Vagina (tissue), 2 donors: ENCODE measurements at regions of chr14 and their contacts with region 1.

Region 1: GRCh38 chr14:77040059-77040740 is 11.7 kb upstream of the IRF2BPL start:
- DNase-seq: peak in 1 of 2 donors; percentile 98
- H3K4me3 ChIP-seq: peak overlapping the region; percentile 30 to 34
- H3K27ac ChIP-seq: peak overlapping the region; percentile 98
- H3K4me1 ChIP-seq: peaks cover 92% of the 10 kb centered on the region
- H3K27me3 ChIP-seq: no peaks in the 10 kb centered on the region
- CTCF ChIP-seq: no peak
- POLR2A ChIP-seq: no peak

Region 2: DNA sequence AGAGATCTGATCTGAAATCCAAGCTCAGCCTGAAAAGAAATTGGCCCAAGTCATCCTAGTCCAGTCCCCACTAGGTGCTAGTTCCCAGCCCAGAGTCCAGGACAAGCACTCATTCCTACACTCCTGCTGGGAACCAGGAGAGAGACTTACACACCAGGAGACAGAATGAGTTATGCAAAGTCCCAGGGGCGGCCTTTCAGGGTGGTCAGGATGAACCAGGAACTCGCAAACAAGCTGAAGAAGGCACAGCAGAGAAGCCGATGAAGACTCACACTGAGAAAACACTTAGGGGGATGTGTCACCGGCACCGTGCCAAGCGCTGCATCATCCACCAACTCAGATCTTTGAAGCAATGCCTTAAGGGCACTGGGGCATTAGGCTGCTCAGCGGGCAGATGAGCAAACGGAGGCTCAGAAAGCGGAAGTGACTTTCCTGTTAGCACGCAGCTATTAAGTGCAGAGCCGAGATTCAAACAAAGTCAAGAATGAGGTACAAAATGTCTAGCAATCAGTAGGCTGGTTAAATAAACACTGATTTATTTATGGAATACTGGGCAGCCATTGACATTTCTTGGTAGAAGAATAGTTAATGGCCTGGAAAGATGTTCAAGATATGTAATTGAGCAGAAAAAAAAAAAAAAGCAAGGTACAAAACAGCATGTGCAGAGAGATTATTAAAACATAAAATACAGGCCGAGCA is 135.3 kb before region 1 on chr14:
- intact Hi-C with region 1: no loop called
- DNase-seq: no peak
- H3K4me3 ChIP-seq: no peak overlapping the region
- H3K27ac ChIP-seq: peak overlapping the region; percentile 79
- H3K4me1 ChIP-seq: peaks cover 58% of the 10 kb centered on the region
- H3K27me3 ChIP-seq: no peaks in the 10 kb centered on the region
- CTCF ChIP-seq: no peak
- POLR2A ChIP-seq: no peak

Region 3: DNA sequence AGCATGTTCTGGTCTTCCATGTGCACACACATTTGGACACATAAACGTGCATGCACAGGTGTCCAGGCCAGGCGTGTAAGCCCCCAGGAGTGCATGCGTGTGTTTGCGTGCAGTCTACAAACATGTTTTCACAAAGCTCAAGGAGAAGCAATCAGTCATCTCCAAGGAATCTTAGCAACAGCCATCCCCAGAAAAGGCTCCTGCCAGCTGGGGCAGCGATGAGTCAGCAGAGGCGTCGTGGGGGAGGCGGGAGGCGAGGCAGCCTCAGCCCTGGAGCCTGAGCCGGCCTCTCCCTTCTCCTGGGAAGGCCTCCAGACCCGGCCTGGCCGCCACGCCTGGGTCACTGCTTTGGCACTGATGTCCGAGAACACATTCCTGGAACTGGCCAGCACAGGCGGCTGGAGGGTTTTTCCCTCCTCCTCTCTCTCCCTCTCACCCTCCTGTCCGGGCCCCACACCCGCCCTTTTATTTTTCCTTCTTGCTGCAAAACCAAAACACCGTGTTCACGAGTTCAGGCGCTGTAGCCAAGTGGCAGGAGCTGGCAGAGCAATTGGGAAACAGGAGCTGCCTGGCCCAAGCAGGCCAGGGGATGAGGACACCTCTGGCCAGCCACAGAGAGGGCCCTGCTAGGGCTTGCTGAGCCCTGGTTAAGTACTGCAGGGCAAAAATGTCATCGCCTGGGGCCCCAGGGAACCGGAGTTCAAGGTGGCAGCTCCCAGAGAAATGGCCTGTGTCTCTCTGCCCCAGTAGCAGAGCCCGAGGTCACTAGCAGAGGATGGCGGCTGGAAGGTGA is 121.3 kb before region 1 on chr14:
- intact Hi-C with region 1: loop called (anchors 5 kb)
- DNase-seq: peak in 1 of 2 donors; percentile 99
- H3K4me3 ChIP-seq: peak overlapping the region in 1 of 2 donors; percentile 12
- H3K27ac ChIP-seq: peak overlapping the region; percentile 83
- H3K4me1 ChIP-seq: peaks cover 77% of the 10 kb centered on the region
- H3K27me3 ChIP-seq: no peaks in the 10 kb centered on the region
- CTCF ChIP-seq: peak in 1 of 3 experiments; percentile 24
- POLR2A ChIP-seq: no peak

Region 4: GRCh38 chr14:77028384-77029231 is 11.6 kb before region 1 on chr14 and contains the start of gene IRF2BPL:
- intact Hi-C with region 1: loop called (anchors 2 kb)
- DNase-seq: peak in 1 of 2 donors; percentile 100
- H3K4me3 ChIP-seq: peak within 1 kb of the TSS; percentile 60 to 84
- H3K27ac ChIP-seq: peak within 1 kb of the TSS; percentile 98
- H3K4me1 ChIP-seq: peaks cover 70% of the 10 kb centered on the region
- H3K27me3 ChIP-seq: no peaks in the 10 kb centered on the region
- CTCF ChIP-seq: no peak
- POLR2A ChIP-seq: peak in 1 of 2 donors; percentile 97
- total RNA-seq, gene IRF2BPL: 51.1 TPM

Region 5: GRCh38 chr14:77067632-77068514 is 27.7 kb after region 1 on chr14:
- intact Hi-C with region 1: loop called (anchors 1 kb)
- DNase-seq: peak in 1 of 2 donors; percentile 67
- H3K4me3 ChIP-seq: no peak overlapping the region
- H3K27ac ChIP-seq: peak overlapping the region; percentile 71
- H3K4me1 ChIP-seq: peaks cover 14% of the 10 kb centered on the region
- H3K27me3 ChIP-seq: no peaks in the 10 kb centered on the region
- CTCF ChIP-seq: peak; percentile 73 to 93 (median 90)
- POLR2A ChIP-seq: no peak